Esophagus squamous epithelium (tissue), 5 donors: ENCODE measurements at regions of chr3 and their contacts with region 1.

Region 1: GRCh38 chr3:73624821-73625665 is at the start of gene PDZRN3:
- DNase-seq: no peak
- H3K4me3 ChIP-seq: peak within 1 kb of the TSS; percentile 52 to 73 (median 66)
- H3K27ac ChIP-seq: peak within 1 kb of the TSS; percentile 77 to 91 (median 84)
- H3K4me1 ChIP-seq: peaks cover 0 to 65% (median 8%) of the 10 kb centered on the region in 3 donors
- H3K27me3 ChIP-seq: peaks cover 0 to 21% (median 0%) of the 10 kb centered on the region in 4 donors
- CTCF ChIP-seq: no peak
- POLR2A ChIP-seq: peak in 2 of 4 donors; percentile 68 to 83
- total RNA-seq, gene PDZRN3: 22.1 to 54.9 (median 38.9) TPM

Region 2: DNA sequence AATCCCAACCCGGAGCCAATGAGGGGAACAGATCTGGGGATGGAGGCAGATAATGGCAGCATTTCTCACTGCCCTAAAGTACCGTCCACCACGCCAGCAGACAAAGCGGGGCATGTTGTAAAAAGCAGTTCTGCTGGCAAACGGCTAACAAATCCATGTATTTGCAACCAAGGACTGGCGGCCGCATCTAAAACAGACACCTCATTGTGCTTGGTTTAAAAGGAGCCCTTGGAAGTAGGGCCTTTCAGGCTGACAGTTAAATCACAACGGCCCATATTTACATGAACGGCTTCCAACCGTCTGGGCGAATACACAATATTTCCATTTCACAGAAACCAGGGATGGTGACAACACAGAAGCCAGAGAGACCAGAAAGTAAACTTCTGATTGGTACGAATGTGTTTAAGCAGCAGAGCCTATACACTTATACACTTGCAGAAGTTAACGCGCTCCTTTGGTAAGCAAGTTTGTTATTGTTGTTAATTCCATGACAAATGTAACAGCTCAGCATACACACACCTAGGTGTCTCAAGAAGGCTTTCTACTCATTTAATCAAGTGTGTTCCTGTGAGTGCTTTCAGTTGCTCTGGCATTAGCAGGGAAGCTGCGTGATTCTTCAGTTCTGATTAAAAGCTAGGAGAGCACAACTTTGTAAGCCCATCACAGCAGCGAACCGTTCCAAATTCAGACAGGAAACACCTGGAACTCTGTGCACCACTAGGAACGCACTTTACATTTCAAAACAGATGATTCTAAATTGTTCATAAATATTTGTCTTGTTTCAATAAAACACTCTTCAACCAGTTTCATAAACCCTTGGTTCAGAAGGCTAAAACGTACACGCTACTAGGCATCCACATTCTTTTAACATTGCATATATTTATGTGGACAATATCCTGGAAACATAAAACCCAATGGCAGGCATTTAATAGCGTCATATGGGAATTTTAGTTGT is 113.2 kb before region 1 on chr3:
- intact Hi-C with region 1: loop called (anchors 10 kb)
- DNase-seq: no peak
- H3K4me3 ChIP-seq: no peak overlapping the region
- H3K27ac ChIP-seq: peak overlapping the region in 3 of 4 donors; percentile 72 to 81 (median 77)
- H3K4me1 ChIP-seq: peaks cover 0 to 72% (median 6%) of the 10 kb centered on the region in 3 donors
- H3K27me3 ChIP-seq: no peaks in the 10 kb centered on the region
- CTCF ChIP-seq: no peak
- POLR2A ChIP-seq: no peak

Region 3: DNA sequence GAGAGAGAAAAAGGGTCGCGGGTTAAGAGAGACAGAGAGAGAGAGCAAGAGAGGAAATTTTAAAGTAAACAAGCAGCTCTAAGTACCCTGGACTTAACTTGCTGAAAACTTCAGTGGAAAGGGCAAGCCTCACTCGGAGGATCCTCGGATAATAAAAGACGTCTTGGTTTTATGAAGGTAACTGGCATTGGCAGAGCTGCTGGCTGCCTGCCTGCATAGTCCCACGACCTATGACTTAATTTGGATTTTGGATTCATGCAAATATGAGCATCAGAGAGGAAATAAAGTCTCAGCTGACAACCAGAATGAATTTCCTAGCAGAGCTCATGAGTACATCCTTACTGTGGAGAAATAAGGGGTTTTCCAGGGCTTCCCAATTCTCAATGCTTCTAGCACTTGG is 94.8 kb after region 1 on chr3:
- intact Hi-C with region 1: loop called (anchors 10 kb)
- DNase-seq: no peak
- H3K4me3 ChIP-seq: peak overlapping the region in 2 of 4 donors; percentile 6 to 30
- H3K27ac ChIP-seq: peak overlapping the region; percentile 60 to 85 (median 73)
- H3K4me1 ChIP-seq: peaks cover 0 to 45% (median 22%) of the 10 kb centered on the region in 3 donors
- H3K27me3 ChIP-seq: no peaks in the 10 kb centered on the region
- CTCF ChIP-seq: no peak
- POLR2A ChIP-seq: no peak

Region 4: GRCh38 chr3:73827725-73828211 is 202.7 kb after region 1 on chr3:
- intact Hi-C with region 1: loop called (anchors 10 kb)
- DNase-seq: no peak
- H3K4me3 ChIP-seq: no peak overlapping the region
- H3K27ac ChIP-seq: peak overlapping the region in 1 of 4 donors; percentile 18
- H3K4me1 ChIP-seq: no peaks in the 10 kb centered on the region
- H3K27me3 ChIP-seq: no peaks in the 10 kb centered on the region
- CTCF ChIP-seq: no peak
- POLR2A ChIP-seq: no peak